ENCODE measurements at regions of chr13 and their contacts with region 1.

Region 1: GRCh38 chr13:112790735-112791641 is 101.2 kb downstream of the ATP11A start:
- DNase-seq: no peak
- CTCF ChIP-seq: no peak

Region 2: GRCh38 chr13:112711528-112712265 is 79.3 kb before region 1 on chr13:
- in situ Hi-C with region 1: no loop called
- DNase-seq: peak; percentile 76
- CTCF ChIP-seq: no peak

Region 3: GRCh38 chr13:112733661-112734379 is 57.2 kb before region 1 on chr13:
- in situ Hi-C with region 1: loop called (anchors 10 kb)
- DNase-seq: no peak
- CTCF ChIP-seq: no peak

Measured in GM13976 (cell line).